T-cell (primary cell): ENCODE measurements at regions of chr1 and their contacts with region 1.

Region 1: GRCh38 chr1:101051688-101052638 is 26.4 kb upstream of the DPH5 start:
- DNase-seq: no peak
- ATAC-seq: peak in 1 of 4 experiments; percentile 16
- H3K4me3 ChIP-seq: no peak overlapping the region
- H3K4me3 Mint-ChIP-seq: no peak overlapping the region
- H3K27ac ChIP-seq: no peak overlapping the region
- H3K27ac Mint-ChIP-seq: peak overlapping the region; percentile 19 to 49
- H3K4me1 ChIP-seq: no peaks in the 10 kb centered on the region
- H3K4me1 Mint-ChIP-seq: peaks cover 22 to 41% (median 24%) of the 10 kb centered on the region in 3 donors
- H3K27me3 ChIP-seq: no peaks in the 10 kb centered on the region
- H3K27me3 Mint-ChIP-seq: no peaks in the 10 kb centered on the region

Region 2: GRCh38 chr1:101073836-101074235 is 21.9 kb after region 1 on chr1:
- CTCF ChIA-PET with region 1: no interaction called
- POLR2A ChIA-PET with region 1: interaction called, 3 to 11 read pairs
- DNase-seq: no peak
- ATAC-seq: no peak
- H3K4me3 ChIP-seq: no peak overlapping the region
- H3K4me3 Mint-ChIP-seq: no peak overlapping the region
- H3K27ac ChIP-seq: no peak overlapping the region
- H3K27ac Mint-ChIP-seq: no peak overlapping the region
- H3K4me1 ChIP-seq: peaks cover 5 to 19% of the 10 kb centered on the region in 2 experiments
- H3K4me1 Mint-ChIP-seq: peaks cover 26 to 38% (median 31%) of the 10 kb centered on the region in 3 donors
- H3K27me3 ChIP-seq: no peaks in the 10 kb centered on the region
- H3K27me3 Mint-ChIP-seq: no peaks in the 10 kb centered on the region

Region 3: DNA sequence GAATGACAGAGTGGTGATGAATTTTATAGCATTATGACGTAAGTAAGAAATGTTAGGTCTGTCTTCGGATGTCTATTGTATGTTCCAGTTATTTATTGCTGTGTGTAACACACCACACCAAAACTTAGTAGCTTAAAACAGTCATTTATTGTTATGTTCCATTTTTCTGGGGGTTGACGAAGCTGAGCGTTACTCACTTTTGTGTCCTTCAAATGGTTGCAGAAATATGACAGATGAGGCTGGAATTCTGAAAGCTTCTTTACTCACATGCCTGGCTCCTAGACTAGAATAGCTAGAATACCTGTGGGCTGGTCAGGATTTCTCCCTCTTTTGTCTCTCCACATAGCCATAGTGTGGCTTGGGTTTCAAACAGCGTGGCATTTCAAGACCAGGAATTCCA is 122.8 kb after region 1 on chr1:
- CTCF ChIA-PET with region 1: no interaction called
- POLR2A ChIA-PET with region 1: no interaction called
- DNase-seq: no peak
- ATAC-seq: no peak
- H3K4me3 ChIP-seq: no peak overlapping the region
- H3K4me3 Mint-ChIP-seq: no peak overlapping the region
- H3K27ac ChIP-seq: no peak overlapping the region
- H3K27ac Mint-ChIP-seq: no peak overlapping the region
- H3K4me1 ChIP-seq: peaks cover 6 to 14% of the 10 kb centered on the region in 2 experiments
- H3K4me1 Mint-ChIP-seq: peaks cover 16 to 21% (median 19%) of the 10 kb centered on the region in 3 donors
- H3K27me3 ChIP-seq: no peaks in the 10 kb centered on the region
- H3K27me3 Mint-ChIP-seq: no peaks in the 10 kb centered on the region